Adrenal gland (tissue), 19 donors: ENCODE measurements at regions of chr9 and their contacts with region 1.

Region 1: GRCh38 chr9:6055213-6055612 is 39.8 kb upstream of the RANBP6 start:
- DNase-seq: peak; percentile 24 to 76 (median 66)
- H3K4me3 ChIP-seq: no peak overlapping the region
- H3K27ac ChIP-seq: no peak overlapping the region
- H3K4me1 ChIP-seq: no peaks in the 10 kb centered on the region
- H3K27me3 ChIP-seq: no peaks in the 10 kb centered on the region
- CTCF ChIP-seq: peak; percentile 41 to 90 (median 70)
- POLR2A ChIP-seq: no peak

Region 2: GRCh38 chr9:5886114-5886939 is 168.9 kb before region 1 on chr9:
- intact Hi-C with region 1: loop called in 1 of 2 experiments (anchors 5 kb)
- DNase-seq: peak; percentile 71 to 91 (median 77)
- H3K4me3 ChIP-seq: no peak overlapping the region
- H3K27ac ChIP-seq: no peak overlapping the region
- H3K4me1 ChIP-seq: no peaks in the 10 kb centered on the region
- H3K27me3 ChIP-seq: no peaks in the 10 kb centered on the region
- CTCF ChIP-seq: peak; percentile 80 to 96 (median 84)
- POLR2A ChIP-seq: no peak